GM12878 (cell line): ENCODE measurements at regions of chr6 and their contacts with region 1.

Region 1: GRCh38 chr6:137873273-137873762 is 6.3 kb downstream of the TNFAIP3 start:
- DNase-seq: peak; percentile 95
- ATAC-seq: peak; percentile 54
- H3K4me3 ChIP-seq: peak overlapping the region; percentile 99
- H3K27ac ChIP-seq: peak overlapping the region; percentile 88
- H3K4me1 ChIP-seq: no peaks in the 10 kb centered on the region
- H3K27me3 ChIP-seq: no peaks in the 10 kb centered on the region
- CTCF ChIP-seq: no peak
- EP300 ChIP-seq: peak; percentile 62 to 64; a peak in 2 of 4 replicates
- POLR2A ChIP-seq: 0 out of 2 replicates have a peak, but pooled peaks have one; percentile 27
- RAD21 ChIP-seq: no peak

Region 2: GRCh38 chr6:137351890-137352289 is 521.4 kb before region 1 on chr6:
- CTCF ChIA-PET with region 1: no interaction called
- POLR2A ChIA-PET with region 1: no interaction called
- RAD21 ChIA-PET with region 1: no interaction called
- SMC1A ChIA-PET with region 1: no interaction called
- in situ Hi-C with region 1: no loop called
- intact Hi-C with region 1: no loop called
- DNase-seq: no peak
- ATAC-seq: no peak
- H3K4me3 ChIP-seq: no peak overlapping the region
- H3K27ac ChIP-seq: no peak overlapping the region
- H3K4me1 ChIP-seq: no peaks in the 10 kb centered on the region
- H3K27me3 ChIP-seq: no peaks in the 10 kb centered on the region
- CTCF ChIP-seq: no peak
- EP300 ChIP-seq: no peak
- POLR2A ChIP-seq: no peak
- RAD21 ChIP-seq: no peak

Region 3: GRCh38 chr6:137744877-137745276 is 128.4 kb before region 1 on chr6:
- CTCF ChIA-PET with region 1: interaction called, 5 read pairs
- POLR2A ChIA-PET with region 1: no interaction called
- RAD21 ChIA-PET with region 1: interaction called, 17 read pairs
- SMC1A ChIA-PET with region 1: no interaction called
- in situ Hi-C with region 1: no loop called
- intact Hi-C with region 1: no loop called
- DNase-seq: peak; percentile 75
- ATAC-seq: peak; percentile 79
- H3K4me3 ChIP-seq: peak overlapping the region; percentile 29; the same call in 1 of the 2 replicates
- H3K27ac ChIP-seq: peak overlapping the region; percentile 34; the same call in 1 of the 2 replicates
- H3K4me1 ChIP-seq: peaks cover 36% of the 10 kb centered on the region
- H3K27me3 ChIP-seq: no peaks in the 10 kb centered on the region
- CTCF ChIP-seq: no peak
- EP300 ChIP-seq: peak; percentile 25 to 28; a peak in 2 of 4 replicates
- POLR2A ChIP-seq: no peak
- RAD21 ChIP-seq: no peak

Region 4: DNA sequence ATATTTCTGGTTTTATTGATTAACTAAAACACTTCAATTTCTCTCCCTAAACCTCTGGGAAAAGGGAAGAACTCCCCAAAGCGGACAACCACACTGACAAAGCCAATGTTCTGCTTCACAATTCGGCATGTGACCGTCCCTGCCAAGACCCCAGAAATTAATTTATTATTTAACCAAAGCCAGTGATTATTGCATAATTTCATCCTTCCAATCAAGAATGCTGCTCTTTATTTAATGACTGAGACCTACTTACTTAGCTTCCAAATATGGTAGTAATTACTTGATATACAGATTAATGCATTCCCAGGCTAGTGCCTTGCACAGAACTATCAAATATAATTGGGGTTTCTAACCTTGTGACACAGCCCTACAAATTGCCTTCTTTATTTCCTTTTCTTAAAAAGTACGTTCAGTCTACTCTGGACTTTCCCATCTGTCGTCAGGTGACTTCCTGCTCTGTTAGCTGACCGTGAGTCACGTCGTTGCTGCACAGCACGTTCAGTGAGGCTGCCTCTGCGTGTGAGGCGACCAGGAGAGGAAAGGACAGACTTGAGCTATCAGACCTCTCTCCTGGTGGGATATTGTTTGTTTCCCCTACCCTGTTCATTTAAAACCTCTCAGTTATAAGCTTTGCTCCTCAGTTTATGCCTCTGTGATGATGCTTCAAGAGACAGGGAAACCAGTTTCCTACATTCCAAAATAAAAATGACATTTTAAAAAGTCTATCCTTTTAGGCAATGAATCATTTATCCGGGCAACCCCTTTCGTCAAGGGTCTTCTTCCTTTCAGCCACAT is 62.0 kb before region 1 on chr6:
- CTCF ChIA-PET with region 1: interaction called, 11 read pairs
- POLR2A ChIA-PET with region 1: interaction called, 7 read pairs
- RAD21 ChIA-PET with region 1: interaction called, 21 read pairs
- SMC1A ChIA-PET with region 1: interaction called, 22 read pairs
- in situ Hi-C with region 1: no loop called
- intact Hi-C with region 1: no loop called
- DNase-seq: peak; percentile 95
- ATAC-seq: peak; percentile 95
- H3K4me3 ChIP-seq: peak overlapping the region; percentile 20
- H3K27ac ChIP-seq: peak overlapping the region; percentile 89
- H3K4me1 ChIP-seq: peaks cover 31% of the 10 kb centered on the region
- H3K27me3 ChIP-seq: no peaks in the 10 kb centered on the region
- CTCF ChIP-seq: no peak
- EP300 ChIP-seq: peak in 1 of 2 experiments; percentile 72; a peak in 2 of 4 replicates
- POLR2A ChIP-seq: peak; percentile 88
- RAD21 ChIP-seq: no peak

Region 5: DNA sequence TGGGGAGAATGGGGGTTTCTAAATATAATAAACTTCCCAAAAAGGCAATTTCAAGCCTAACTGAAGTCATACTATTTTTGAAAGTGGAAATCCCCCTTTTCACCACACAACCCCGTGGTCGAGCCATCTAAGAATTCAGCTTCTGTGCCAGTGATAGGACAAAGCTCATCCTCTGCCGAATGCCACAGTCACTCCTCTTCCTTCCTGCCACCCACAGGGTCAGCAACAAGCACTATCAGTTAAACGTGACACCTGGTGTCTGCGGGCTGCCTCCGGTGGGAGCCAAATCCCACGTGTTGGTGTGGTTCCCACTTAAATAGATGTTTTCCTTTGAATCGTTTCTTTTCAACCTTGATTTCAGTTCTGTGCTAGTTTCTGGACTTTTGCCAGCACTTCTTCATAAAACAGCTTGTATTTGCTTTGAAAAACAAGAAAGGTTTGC is 54.5 kb after region 1 on chr6:
- CTCF ChIA-PET with region 1: interaction called, 65 read pairs
- POLR2A ChIA-PET with region 1: interaction called, 28 read pairs
- RAD21 ChIA-PET with region 1: interaction called, 75 read pairs
- SMC1A ChIA-PET with region 1: interaction called, 1,237 read pairs
- in situ Hi-C with region 1: no loop called
- intact Hi-C with region 1: loop called (anchors 5 kb)
- DNase-seq: peak; percentile 99
- ATAC-seq: peak; percentile 93
- H3K4me3 ChIP-seq: peak overlapping the region; percentile 19; the same call in 1 of the 2 replicates
- H3K27ac ChIP-seq: peak overlapping the region; percentile 98
- H3K4me1 ChIP-seq: peaks cover 61% of the 10 kb centered on the region
- H3K27me3 ChIP-seq: no peaks in the 10 kb centered on the region
- CTCF ChIP-seq: no peak
- EP300 ChIP-seq: peak; percentile 91; a peak in 3 of 4 replicates
- POLR2A ChIP-seq: peak; percentile 69; the same call in 1 of the 2 replicates
- RAD21 ChIP-seq: 0 out of 2 replicates have a peak, but pooled peaks have one; percentile 4

Region 6: DNA sequence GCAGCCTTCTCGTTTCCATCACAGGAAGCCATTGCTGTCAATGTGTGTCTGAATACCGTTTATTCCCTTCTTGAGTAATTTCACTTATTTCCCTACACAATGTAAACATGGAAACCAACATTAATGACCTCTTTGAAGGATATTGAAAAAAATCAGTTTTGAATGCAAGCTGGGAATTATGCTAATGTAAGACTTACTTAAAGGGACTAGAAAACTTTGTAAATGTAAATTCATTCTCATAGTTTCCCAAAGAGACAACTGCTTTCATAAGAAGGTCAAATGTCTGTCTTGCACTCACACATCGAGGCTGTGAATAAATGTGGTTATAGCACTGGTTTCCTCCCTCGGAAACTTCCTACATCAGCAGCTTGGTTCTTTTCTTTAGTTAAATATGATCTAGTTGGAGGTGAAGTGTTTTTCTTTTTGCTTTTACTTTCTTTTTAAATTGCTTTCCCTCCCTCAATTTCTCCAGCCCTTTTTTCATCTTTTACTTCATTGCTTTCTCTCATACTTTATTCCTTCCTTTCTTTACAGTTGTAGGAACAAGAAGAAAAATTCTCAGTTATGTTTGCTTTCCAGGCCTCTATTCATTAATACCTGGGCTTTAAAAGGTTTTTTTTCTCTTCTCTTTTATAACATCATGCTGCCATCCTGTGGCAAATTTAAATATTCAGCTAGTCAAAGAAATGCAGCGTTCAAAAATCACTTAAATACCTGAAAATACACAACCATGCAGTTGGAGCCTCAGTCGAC is 102.0 kb after region 1 on chr6:
- CTCF ChIA-PET with region 1: interaction called, 70 read pairs
- POLR2A ChIA-PET with region 1: interaction called, 8 read pairs
- RAD21 ChIA-PET with region 1: interaction called, 16 read pairs
- SMC1A ChIA-PET with region 1: interaction called, 41 read pairs
- in situ Hi-C with region 1: no loop called
- intact Hi-C with region 1: loop called (anchors 1 kb)
- DNase-seq: peak; percentile 53
- ATAC-seq: peak; percentile 67
- H3K4me3 ChIP-seq: peak overlapping the region; percentile 1; the same call in 1 of the 2 replicates
- H3K27ac ChIP-seq: peak overlapping the region; percentile 34
- H3K4me1 ChIP-seq: peaks cover 36% of the 10 kb centered on the region
- H3K27me3 ChIP-seq: no peaks in the 10 kb centered on the region
- CTCF ChIP-seq: peak; percentile 23 to 62 (median 44); a peak in 5 of 6 replicates
- EP300 ChIP-seq: no peak
- POLR2A ChIP-seq: no peak
- RAD21 ChIP-seq: peak; percentile 81

Region 7: DNA sequence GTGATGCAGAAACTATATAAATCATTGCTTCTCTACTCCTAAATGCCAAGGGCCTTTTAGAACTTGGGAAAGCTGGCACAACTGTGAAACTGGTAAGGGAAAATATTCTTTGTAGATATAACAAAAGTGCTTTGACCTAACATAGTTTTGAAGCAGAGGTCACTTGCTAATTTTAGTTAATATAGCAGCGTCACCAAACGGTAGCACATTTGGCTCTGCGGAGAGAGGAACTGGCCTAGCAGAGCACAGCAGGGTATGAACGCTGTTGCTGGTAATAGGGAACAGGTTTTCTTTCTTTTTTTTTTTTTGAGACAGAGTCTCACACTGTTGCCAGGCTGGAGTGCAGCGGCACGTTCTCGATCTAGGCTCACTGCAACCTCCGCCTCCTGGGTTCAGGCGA is 990.0 kb after region 1 on chr6:
- CTCF ChIA-PET with region 1: no interaction called
- POLR2A ChIA-PET with region 1: no interaction called
- RAD21 ChIA-PET with region 1: no interaction called
- SMC1A ChIA-PET with region 1: no interaction called
- in situ Hi-C with region 1: no loop called
- intact Hi-C with region 1: no loop called
- DNase-seq: no peak
- ATAC-seq: peak; percentile 32; the same call in 1 of the 3 replicates
- H3K4me3 ChIP-seq: no peak overlapping the region
- H3K27ac ChIP-seq: no peak overlapping the region
- H3K4me1 ChIP-seq: peaks cover 3% of the 10 kb centered on the region; the same call in 1 of the 2 replicates
- H3K27me3 ChIP-seq: no peaks in the 10 kb centered on the region
- CTCF ChIP-seq: no peak
- EP300 ChIP-seq: no peak
- POLR2A ChIP-seq: no peak
- RAD21 ChIP-seq: no peak